ENCODE measurements at regions of chr1 and their contacts with region 1.

Region 1: GRCh38 chr1:206912445-206913095 is 9.2 kb downstream of the FCMR start:
- DNase-seq: peak; percentile 91
- H3K4me3 Mint-ChIP-seq: no peak overlapping the region
- H3K27ac Mint-ChIP-seq: no peak overlapping the region
- H3K4me1 Mint-ChIP-seq: peaks cover 59% of the 10 kb centered on the region
- H3K27me3 Mint-ChIP-seq: peaks cover 3% of the 10 kb centered on the region

Region 2: GRCh38 chr1:206725109-206725963 is 187.2 kb before region 1 on chr1:
- intact Hi-C with region 1: loop called (anchors 1 kb)
- DNase-seq: peak; percentile 89
- H3K4me3 Mint-ChIP-seq: no peak overlapping the region
- H3K27ac Mint-ChIP-seq: peak overlapping the region; percentile 17
- H3K4me1 Mint-ChIP-seq: peaks cover 39% of the 10 kb centered on the region
- H3K27me3 Mint-ChIP-seq: no peaks in the 10 kb centered on the region

Region 3: DNA sequence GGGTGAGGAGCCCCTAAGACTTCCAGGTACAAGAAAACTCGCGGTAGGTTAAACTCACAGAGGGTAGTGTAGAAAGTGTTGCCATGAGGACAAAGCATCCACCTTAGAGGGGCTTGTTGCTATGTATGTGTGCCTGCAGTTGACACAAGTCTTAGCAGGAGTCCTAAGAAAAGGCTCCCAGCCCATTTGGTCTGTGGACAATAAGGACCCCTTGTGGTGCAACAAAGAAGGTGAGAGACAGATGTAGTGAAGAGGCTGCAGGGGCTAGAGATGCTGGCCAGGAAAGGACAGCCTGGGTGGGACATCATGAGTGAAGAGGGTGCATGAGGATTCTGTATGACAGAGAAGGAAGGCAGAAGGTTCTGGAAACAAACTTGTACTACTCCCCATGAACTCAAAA is 104.0 kb before region 1 on chr1:
- intact Hi-C with region 1: loop called (anchors 1 kb)
- DNase-seq: peak; percentile 87
- H3K4me3 Mint-ChIP-seq: no peak overlapping the region
- H3K27ac Mint-ChIP-seq: peak overlapping the region; percentile 12
- H3K4me1 Mint-ChIP-seq: peaks cover 47% of the 10 kb centered on the region
- H3K27me3 Mint-ChIP-seq: peaks cover 8% of the 10 kb centered on the region

Region 4: DNA sequence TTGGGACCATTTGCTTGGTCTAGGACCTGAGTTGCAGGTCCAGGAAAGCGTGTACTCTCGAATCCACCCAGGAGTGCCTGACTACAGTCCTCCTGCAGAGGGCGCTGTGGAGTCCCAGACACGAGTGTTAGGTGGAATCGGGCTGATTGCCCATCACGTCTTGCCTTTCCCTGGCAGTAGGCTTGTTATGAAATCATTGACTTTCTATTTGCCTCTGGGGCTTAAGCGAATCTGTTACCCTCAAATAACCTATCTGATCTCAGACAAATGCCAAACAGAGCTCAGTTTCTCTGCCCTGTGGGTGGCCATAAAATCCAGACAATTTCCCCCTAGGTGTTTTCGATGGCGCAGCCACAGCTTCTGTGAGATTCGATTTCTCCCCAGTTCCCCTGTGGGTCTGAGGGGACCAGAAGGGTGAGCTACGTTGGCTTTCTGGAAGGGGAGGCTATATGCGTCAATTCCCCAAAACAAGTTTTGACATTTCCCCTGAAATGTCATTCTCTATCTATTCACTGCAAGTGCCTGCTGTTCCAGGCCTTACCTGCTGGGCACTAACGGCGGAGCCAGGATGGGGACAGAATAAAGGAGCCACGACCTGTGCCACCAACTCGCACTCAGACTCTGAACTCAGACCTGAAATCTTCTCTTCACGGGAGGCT is 47.4 kb before region 1 on chr1 and contains the start of gene IL20:
- intact Hi-C with region 1: loop called (anchors 1 kb)
- DNase-seq: peak; percentile 95
- H3K4me3 Mint-ChIP-seq: no peak within 1 kb of the TSS
- H3K27ac Mint-ChIP-seq: peak within 1 kb of the TSS; percentile 32
- H3K4me1 Mint-ChIP-seq: peaks cover 9% of the 10 kb centered on the region
- H3K27me3 Mint-ChIP-seq: peaks cover 30% of the 10 kb centered on the region
- total RNA-seq, gene IL20: not detected in 2 replicates

Region 5: GRCh38 chr1:206898089-206898912 is 14.3 kb before region 1 on chr1:
- intact Hi-C with region 1: no loop called
- DNase-seq: no peak
- H3K4me3 Mint-ChIP-seq: peak overlapping the region; percentile 35
- H3K27ac Mint-ChIP-seq: peak overlapping the region; percentile 44
- H3K4me1 Mint-ChIP-seq: peaks cover 33% of the 10 kb centered on the region
- H3K27me3 Mint-ChIP-seq: no peaks in the 10 kb centered on the region